Uterus (tissue), 4 donors: ENCODE measurements at regions of chr18 and their contacts with region 1.

Region 1: GRCh38 chr18:7177116-7177744 is 53.7 kb upstream of the LRRC30 start:
- DNase-seq: peak; percentile 41 to 72
- H3K4me3 ChIP-seq: no peak overlapping the region
- H3K27ac ChIP-seq: no peak overlapping the region
- H3K4me1 ChIP-seq: no peaks in the 10 kb centered on the region
- H3K27me3 ChIP-seq: no peaks in the 10 kb centered on the region
- CTCF ChIP-seq: peak; percentile 61 to 72 (median 65)
- POLR2A ChIP-seq: no peak

Region 2: DNA sequence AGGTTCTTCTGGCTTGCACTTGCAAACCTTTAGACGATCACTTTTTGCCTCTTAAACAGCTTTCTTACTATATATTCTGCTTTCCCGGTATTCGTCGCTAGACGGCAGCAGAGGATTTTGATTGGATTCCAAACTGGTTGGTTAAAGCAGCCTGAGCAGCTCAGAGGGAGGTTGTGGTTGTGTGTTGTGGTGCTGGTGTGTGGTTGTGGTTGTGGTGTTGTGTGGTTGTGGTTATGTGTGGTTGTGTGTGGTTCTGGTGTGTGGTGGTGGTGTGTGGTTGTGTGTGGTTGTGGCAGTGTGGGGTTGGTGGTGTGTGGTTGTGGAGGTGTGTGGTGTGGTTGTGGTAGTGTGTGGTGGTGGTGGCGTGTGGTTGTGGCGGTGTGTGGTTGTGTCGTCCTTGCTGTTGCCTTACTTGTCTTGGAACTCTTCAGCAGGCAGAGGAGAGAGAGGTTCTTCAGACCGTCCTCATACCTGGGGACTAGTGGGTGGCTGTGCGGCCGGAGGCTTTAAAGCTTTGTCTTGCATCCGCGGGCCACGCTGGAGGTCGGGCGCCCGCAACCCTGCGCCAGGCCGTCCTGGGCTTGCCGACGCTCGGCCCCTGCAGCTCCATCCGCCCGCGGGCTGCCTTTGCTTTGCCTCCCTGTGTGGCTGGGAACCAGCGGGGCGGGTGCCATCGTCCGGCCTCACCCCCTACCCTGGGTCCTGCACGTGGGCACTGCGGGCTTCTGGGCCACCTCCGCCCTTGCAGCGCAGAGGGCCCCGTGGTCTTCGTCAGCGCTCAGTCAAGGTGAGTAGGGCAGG is 256.9 kb before region 1 on chr18:
- intact Hi-C with region 1: loop called (anchors 10 kb)
- DNase-seq: peak; percentile 39 to 42
- H3K4me3 ChIP-seq: no peak overlapping the region
- H3K27ac ChIP-seq: no peak overlapping the region
- H3K4me1 ChIP-seq: no peaks in the 10 kb centered on the region
- H3K27me3 ChIP-seq: no peaks in the 10 kb centered on the region
- CTCF ChIP-seq: peak; percentile 32 to 57 (median 50)
- POLR2A ChIP-seq: no peak

Region 3: GRCh38 chr18:7038330-7038851 is 138.8 kb before region 1 on chr18:
- intact Hi-C with region 1: loop called (anchors 10 kb)
- DNase-seq: peak; percentile 91 to 97
- H3K4me3 ChIP-seq: peak overlapping the region in 1 of 2 donors; percentile 14
- H3K27ac ChIP-seq: peak overlapping the region; percentile 89 to 92
- H3K4me1 ChIP-seq: no peaks in the 10 kb centered on the region
- H3K27me3 ChIP-seq: no peaks in the 10 kb centered on the region
- CTCF ChIP-seq: peak; percentile 61 to 75 (median 66)
- POLR2A ChIP-seq: no peak

Region 4: DNA sequence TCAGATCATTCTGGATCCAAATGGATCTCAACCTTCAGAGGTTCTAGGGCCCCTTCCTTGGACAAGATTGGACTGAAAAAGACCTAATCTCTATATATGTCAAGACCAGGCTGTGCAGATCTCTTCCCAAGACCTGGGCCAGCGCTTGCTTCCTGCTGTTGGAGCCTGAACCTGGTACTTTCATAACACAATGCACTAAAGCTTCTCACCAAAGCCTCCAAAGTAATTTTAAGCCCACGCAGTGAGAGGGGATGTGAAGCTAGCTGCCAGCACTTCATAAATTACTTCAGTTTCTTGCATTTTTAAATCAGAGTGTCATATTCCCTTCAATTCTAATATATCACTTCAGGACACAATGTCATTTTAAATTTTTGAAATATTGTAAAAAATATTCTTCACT is 104.3 kb after region 1 on chr18:
- intact Hi-C with region 1: no loop called
- DNase-seq: no peak
- H3K4me3 ChIP-seq: no peak overlapping the region
- H3K27ac ChIP-seq: no peak overlapping the region
- H3K4me1 ChIP-seq: no peaks in the 10 kb centered on the region
- H3K27me3 ChIP-seq: no peaks in the 10 kb centered on the region
- CTCF ChIP-seq: no peak
- POLR2A ChIP-seq: no peak

Region 5: GRCh38 chr18:9082711-9083510 is 1905.7 kb after region 1 on chr18:
- intact Hi-C with region 1: no loop called
- DNase-seq: no peak
- H3K4me3 ChIP-seq: no peak overlapping the region
- H3K27ac ChIP-seq: no peak overlapping the region
- H3K4me1 ChIP-seq: no peaks in the 10 kb centered on the region
- H3K27me3 ChIP-seq: no peaks in the 10 kb centered on the region
- CTCF ChIP-seq: no peak
- POLR2A ChIP-seq: no peak